H1 (cell line): ENCODE measurements at regions of chr3 and their contacts with region 1.

Region 1: GRCh38 chr3:38521391-38521987 is 25.3 kb downstream of the EXOG start:
- DNase-seq: peak in 1 of 2 experiments; percentile 83
- H3K4me3 ChIP-seq: no peak overlapping the region
- H3K27ac ChIP-seq: no peak overlapping the region
- H3K4me1 ChIP-seq: peaks cover 0 to 19% (median 3%) of the 10 kb centered on the region in 4 experiments; a peak in 4 of 7 replicates
- H3K27me3 ChIP-seq: no peaks in the 10 kb centered on the region
- CTCF ChIP-seq: peak in 2 of 3 experiments; percentile 91 to 94; a peak in 3 of 4 replicates
- EP300 ChIP-seq: no peak
- POLR2A ChIP-seq: no peak
- RAD21 ChIP-seq: peak; percentile 91 to 94

Region 2: GRCh38 chr3:38446085-38446686 is 75.3 kb before region 1 on chr3:
- CTCF ChIA-PET with region 1: no interaction called
- POLR2A ChIA-PET with region 1: no interaction called
- DNase-seq: no peak
- H3K4me3 ChIP-seq: no peak overlapping the region
- H3K27ac ChIP-seq: no peak overlapping the region
- H3K4me1 ChIP-seq: no peaks in the 10 kb centered on the region
- H3K27me3 ChIP-seq: no peaks in the 10 kb centered on the region
- CTCF ChIP-seq: no peak
- EP300 ChIP-seq: no peak
- POLR2A ChIP-seq: no peak
- RAD21 ChIP-seq: no peak

Region 3: DNA sequence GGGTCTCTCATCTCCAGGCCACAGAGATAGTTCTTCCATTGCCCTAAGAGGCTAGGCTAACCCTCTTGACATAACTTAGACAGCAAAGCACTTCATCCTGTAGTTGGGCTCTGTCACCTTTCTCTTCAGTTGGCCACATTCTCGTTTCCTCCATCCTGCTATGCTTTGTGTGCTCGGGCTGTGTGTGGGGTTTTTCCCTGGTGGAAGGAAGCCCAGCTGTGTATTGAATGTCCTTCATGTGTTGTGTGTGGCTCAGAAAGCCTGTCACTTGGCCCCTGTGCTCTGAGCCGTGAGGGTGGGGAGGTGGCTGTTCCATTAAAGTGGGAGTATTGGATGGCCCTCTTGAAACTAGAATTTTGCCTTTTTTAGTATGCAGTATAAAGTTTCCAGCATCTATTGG is 34.2 kb before region 1 on chr3:
- CTCF ChIA-PET with region 1: interaction called, 14 read pairs
- POLR2A ChIA-PET with region 1: interaction called, 3 read pairs
- DNase-seq: no peak
- H3K4me3 ChIP-seq: no peak overlapping the region
- H3K27ac ChIP-seq: no peak overlapping the region
- H3K4me1 ChIP-seq: no peaks in the 10 kb centered on the region
- H3K27me3 ChIP-seq: no peaks in the 10 kb centered on the region
- CTCF ChIP-seq: no peak
- EP300 ChIP-seq: no peak
- POLR2A ChIP-seq: no peak
- RAD21 ChIP-seq: no peak

Region 4: DNA sequence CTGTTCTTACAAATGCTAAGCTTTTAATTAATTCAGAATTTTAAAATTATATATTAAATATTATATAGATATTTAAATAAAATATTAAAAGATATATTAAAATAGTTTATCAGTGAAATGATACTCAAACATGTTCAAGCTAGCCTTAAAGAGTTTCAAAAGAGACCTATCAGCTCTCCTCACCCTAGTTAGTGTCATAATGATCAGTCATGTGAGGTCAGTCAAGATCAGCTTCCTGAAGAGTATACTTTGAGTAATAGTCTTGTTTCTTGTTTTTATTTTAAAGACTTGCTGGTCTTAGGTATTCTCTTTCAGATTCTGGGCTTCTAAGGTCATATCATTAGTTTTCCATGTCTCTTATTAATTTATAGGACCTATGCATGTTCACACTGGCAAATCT is 10.9 kb before region 1 on chr3:
- CTCF ChIA-PET with region 1: interaction called, 18 read pairs
- POLR2A ChIA-PET with region 1: interaction called, 8 read pairs
- DNase-seq: no peak
- H3K4me3 ChIP-seq: no peak overlapping the region
- H3K27ac ChIP-seq: no peak overlapping the region
- H3K4me1 ChIP-seq: no peaks in the 10 kb centered on the region
- H3K27me3 ChIP-seq: no peaks in the 10 kb centered on the region
- CTCF ChIP-seq: no peak
- EP300 ChIP-seq: no peak
- POLR2A ChIP-seq: no peak
- RAD21 ChIP-seq: no peak

Region 5: GRCh38 chr3:38574411-38575278 is 53.2 kb after region 1 on chr3:
- CTCF ChIA-PET with region 1: interaction called, 14 read pairs
- POLR2A ChIA-PET with region 1: no interaction called
- DNase-seq: peak in 1 of 2 experiments; percentile 37
- H3K4me3 ChIP-seq: no peak overlapping the region
- H3K27ac ChIP-seq: no peak overlapping the region
- H3K4me1 ChIP-seq: peaks cover 0 to 10% (median 0%) of the 10 kb centered on the region in 4 experiments; a peak in 2 of 7 replicates
- H3K27me3 ChIP-seq: no peaks in the 10 kb centered on the region; a peak in 2 of 7 replicates
- CTCF ChIP-seq: no peak
- EP300 ChIP-seq: no peak
- POLR2A ChIP-seq: no peak
- RAD21 ChIP-seq: no peak

Region 6: DNA sequence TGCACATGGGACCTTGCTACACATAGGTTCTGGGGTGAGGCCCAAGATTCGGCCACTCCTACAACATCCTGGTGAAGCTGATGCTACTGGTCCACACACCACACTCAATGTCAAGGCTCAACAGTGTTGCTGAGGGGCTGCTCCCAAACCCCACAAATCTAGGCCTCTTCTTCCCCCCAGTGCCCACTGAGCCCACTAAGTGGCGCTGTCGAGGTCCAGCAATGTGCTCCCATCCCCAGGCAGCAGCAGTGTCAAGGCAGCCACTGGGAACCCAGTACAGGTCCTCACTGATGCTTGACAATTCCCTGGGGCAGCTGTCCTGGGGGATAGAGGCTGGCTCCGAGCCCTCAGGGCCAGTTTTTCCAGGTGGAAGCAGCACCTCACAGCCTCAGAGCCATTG is 106.5 kb after region 1 on chr3:
- CTCF ChIA-PET with region 1: interaction called, 249 read pairs
- POLR2A ChIA-PET with region 1: interaction called, 3 read pairs
- DNase-seq: peak in 1 of 2 experiments; percentile 89
- H3K4me3 ChIP-seq: no peak overlapping the region
- H3K27ac ChIP-seq: no peak overlapping the region
- H3K4me1 ChIP-seq: peaks cover 0 to 16% (median 4%) of the 10 kb centered on the region in 4 experiments; a peak in 6 of 7 replicates
- H3K27me3 ChIP-seq: no peaks in the 10 kb centered on the region
- CTCF ChIP-seq: peak in 2 of 3 experiments; percentile 94 to 98; a peak in 3 of 4 replicates
- EP300 ChIP-seq: no peak
- POLR2A ChIP-seq: no peak
- RAD21 ChIP-seq: peak; percentile 74 to 83

Region 7: DNA sequence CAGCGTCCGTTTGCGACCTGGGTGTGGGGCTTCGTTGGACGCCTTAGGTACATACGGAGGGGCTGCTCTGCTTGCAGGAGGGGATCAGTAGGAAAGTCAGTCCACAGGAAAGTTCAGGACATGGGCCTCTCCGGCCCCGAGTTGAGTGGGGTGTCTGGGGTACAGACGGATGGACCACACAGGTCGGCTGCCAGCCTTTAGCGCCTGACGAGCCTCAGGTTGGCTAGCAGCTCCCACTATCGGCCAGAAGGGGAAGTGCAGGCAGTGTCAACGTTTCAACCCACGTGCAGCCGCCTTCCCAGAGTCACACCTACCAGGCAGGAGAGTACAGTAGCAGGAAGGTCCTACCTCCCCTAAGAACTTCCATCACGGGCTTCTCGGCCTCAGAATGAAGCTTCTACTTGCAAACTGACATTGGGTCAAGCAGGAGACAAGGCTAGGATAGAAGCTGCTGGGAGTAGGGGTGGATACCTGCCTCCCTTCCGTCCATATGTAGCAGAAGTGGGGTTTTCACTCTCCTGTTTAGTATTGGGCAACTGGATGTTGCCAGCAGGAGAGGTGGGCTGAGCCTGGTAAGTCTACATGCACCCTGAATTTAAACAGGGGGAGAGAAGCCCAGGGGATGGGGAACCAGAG is 129.8 kb after region 1 on chr3:
- CTCF ChIA-PET with region 1: interaction called, 318 read pairs
- POLR2A ChIA-PET with region 1: no interaction called
- DNase-seq: peak in 1 of 2 experiments; percentile 90
- H3K4me3 ChIP-seq: peak overlapping the region in 2 of 4 experiments; percentile 24 to 59; a peak in 5 of 8 replicates
- H3K27ac ChIP-seq: no peak overlapping the region
- H3K4me1 ChIP-seq: peaks cover 0 to 15% (median 6%) of the 10 kb centered on the region in 4 experiments; a peak in 5 of 7 replicates
- H3K27me3 ChIP-seq: peaks cover 0 to 47% (median 28%) of the 10 kb centered on the region in 4 experiments; a peak in 6 of 7 replicates
- CTCF ChIP-seq: peak; percentile 96 to 100 (median 100)
- EP300 ChIP-seq: no peak; a peak in 1 of 3 replicates
- POLR2A ChIP-seq: no peak
- RAD21 ChIP-seq: peak; percentile 91 to 96

Region 8: DNA sequence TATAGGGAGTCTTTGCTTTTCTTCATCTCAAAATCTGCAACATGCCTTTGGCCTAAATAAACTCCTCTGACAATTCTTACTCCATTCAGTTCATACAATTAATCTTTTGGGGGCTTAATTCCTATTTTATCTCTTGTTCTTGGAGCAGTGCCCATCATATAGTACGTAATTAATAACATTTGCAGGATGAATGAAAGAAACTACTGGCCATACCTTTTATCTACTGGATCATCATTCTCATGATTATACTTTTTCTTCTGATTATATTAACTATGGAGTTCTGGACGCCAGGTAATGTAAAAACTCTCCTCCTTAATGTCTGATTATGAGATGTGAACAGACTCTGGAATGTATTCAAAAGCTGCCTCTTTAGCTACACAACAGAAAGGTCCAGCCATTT is 174.5 kb after region 1 on chr3:
- CTCF ChIA-PET with region 1: no interaction called
- POLR2A ChIA-PET with region 1: no interaction called
- DNase-seq: no peak
- H3K4me3 ChIP-seq: no peak overlapping the region
- H3K27ac ChIP-seq: no peak overlapping the region
- H3K4me1 ChIP-seq: no peaks in the 10 kb centered on the region
- H3K27me3 ChIP-seq: no peaks in the 10 kb centered on the region
- CTCF ChIP-seq: no peak
- EP300 ChIP-seq: no peak
- POLR2A ChIP-seq: no peak
- RAD21 ChIP-seq: no peak